Right ventricle myocardium inferior (tissue), 1 donor: ENCODE measurements at regions of chr20 and their contacts with region 1.

Region 1: GRCh38 chr20:34943808-34944568 is 11.6 kb downstream of the GSS start:
- DNase-seq: no peak
- ATAC-seq: no peak

Region 2: DNA sequence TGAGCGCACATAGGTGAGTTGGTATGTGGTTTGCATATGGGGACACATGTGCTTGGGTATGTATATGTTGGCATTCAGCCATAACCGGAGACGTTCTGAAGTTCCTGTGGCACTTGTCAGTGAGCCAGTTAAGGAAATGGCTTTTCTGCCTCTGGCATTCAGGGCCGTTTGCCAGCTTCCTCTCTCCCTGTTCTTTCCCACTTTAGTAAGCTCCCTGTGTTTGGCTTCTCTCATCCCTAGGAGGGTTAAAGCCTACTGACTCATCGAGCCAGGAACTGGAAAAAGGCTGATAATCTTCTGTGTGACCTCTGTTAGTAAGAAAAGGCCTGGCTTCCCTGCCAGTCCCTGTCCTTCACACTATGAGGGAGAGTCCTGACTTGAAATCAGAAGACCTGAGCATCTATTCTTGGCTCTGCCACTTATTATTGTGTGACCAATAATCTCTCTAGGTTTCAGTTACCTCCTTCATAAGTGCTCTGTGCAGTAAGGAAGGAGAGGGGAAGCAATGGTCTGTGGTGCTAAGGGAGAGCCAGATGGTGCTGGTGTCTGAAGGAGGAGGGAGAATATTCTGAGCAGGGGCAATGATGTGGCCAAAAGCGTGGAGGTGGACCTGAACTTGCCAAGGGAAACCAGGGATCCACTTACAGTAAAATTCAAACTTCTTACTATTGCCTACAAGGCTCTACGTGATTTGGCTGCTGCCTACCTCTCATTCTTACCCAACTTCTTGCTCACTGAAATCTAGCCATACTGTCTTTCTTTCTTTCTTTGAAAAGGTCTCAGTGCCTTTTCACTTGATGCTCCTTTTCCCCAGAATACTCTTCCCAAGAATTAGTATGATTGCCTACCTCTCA is 36.1 kb before region 1 on chr20:
- intact Hi-C with region 1: loop called (anchors 5 kb)
- DNase-seq: no peak
- ATAC-seq: peak; percentile 94